ENCODE measurements at regions of chr12 and their contacts with region 1.

Region 1: GRCh38 chr12:104381731-104382480 is 74.8 kb upstream of the CHST11 start:
- DNase-seq: peak; percentile 51
- H3K4me3 ChIP-seq: no peak overlapping the region
- H3K27ac ChIP-seq: no peak overlapping the region
- H3K27me3 ChIP-seq: no peaks in the 10 kb centered on the region
- CTCF ChIP-seq: peak; percentile 99

Region 2: GRCh38 chr12:104201238-104202001 is 180.5 kb before region 1 on chr12:
- CTCF ChIA-PET with region 1: interaction called, 10 read pairs
- POLR2A ChIA-PET with region 1: no interaction called
- DNase-seq: no peak
- H3K4me3 ChIP-seq: no peak overlapping the region
- H3K27ac ChIP-seq: no peak overlapping the region
- H3K27me3 ChIP-seq: no peaks in the 10 kb centered on the region
- CTCF ChIP-seq: peak; percentile 94

Region 3: DNA sequence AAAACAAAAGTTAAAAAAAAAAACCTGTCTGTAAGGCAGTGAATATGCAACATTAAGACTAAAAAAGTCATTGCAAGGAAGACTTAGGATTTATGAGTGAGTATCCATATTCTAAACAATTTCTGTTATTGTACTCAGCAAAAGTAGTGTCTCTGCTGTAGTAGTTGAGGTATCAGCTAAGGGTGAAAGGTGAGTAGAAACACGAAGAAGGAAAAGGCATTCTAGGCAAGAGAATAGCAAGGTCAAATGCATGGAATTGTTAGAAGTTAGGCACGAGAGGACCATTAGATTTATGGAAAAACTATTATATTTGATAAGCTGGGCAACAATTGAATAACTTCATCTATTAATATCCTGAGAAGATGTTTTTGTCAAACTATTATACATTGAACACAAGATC is 76.6 kb before region 1 on chr12:
- CTCF ChIA-PET with region 1: no interaction called
- POLR2A ChIA-PET with region 1: no interaction called
- DNase-seq: no peak
- H3K4me3 ChIP-seq: no peak overlapping the region
- H3K27ac ChIP-seq: no peak overlapping the region
- H3K27me3 ChIP-seq: no peaks in the 10 kb centered on the region
- CTCF ChIP-seq: no peak

Region 4: DNA sequence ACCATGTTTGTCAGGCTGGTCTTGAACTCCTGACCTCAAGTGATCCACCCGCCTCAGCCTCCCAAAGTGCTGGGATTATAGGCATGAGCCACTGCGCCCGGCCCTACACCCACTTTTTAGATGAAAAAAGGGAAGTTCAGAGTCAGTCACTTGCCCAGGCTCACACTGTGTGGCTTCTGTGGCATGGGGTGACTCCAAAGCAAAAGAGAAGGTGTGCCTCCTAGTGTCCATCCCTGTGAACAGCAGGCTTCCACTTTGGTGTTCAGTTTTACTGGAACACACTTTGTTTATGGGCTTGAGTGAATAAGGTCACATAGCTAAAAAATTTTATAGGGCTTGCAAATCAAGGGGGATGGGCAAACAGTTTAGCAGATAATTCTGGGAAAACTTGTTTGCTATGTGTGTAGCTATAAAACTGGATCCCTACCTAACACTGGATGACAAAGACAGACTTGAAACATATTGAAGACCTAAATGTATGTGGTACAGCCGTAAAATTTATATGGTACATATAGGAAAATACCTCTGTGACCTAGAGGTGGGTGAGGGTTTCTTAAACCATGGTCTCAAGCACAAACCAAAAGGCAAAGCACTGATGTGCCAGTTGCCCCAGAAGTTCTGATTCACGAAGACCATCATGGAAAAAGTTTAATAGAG is 23.4 kb before region 1 on chr12:
- CTCF ChIA-PET with region 1: no interaction called
- POLR2A ChIA-PET with region 1: no interaction called
- DNase-seq: no peak
- H3K4me3 ChIP-seq: no peak overlapping the region
- H3K27ac ChIP-seq: no peak overlapping the region
- H3K27me3 ChIP-seq: no peaks in the 10 kb centered on the region
- CTCF ChIP-seq: peak; percentile 74

Region 5: GRCh38 chr12:104588068-104588920 is 206.4 kb after region 1 on chr12:
- CTCF ChIA-PET with region 1: interaction called, 13 read pairs
- POLR2A ChIA-PET with region 1: no interaction called
- DNase-seq: no peak
- H3K4me3 ChIP-seq: no peak overlapping the region
- H3K27ac ChIP-seq: no peak overlapping the region
- H3K27me3 ChIP-seq: no peaks in the 10 kb centered on the region
- CTCF ChIP-seq: no peak

Region 6: DNA sequence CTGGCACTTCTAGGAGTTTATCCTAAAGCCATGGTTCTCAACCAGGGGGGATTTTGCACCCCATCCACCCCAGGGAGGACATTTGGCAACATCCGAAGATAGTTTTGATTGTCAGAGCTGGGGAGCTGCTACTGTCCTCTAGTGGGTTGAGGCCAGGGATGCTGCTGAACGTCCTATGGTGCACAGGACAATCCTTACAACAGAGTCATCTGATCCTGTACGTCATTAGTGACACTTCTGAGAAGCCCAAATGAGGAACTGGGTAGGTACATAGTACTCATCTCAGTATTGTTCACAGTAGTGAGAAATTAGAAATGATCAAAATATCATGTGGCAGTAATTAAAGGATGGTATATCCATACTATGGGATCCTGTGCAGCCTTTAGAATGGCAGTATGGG is 260.0 kb after region 1 on chr12:
- CTCF ChIA-PET with region 1: no interaction called
- POLR2A ChIA-PET with region 1: no interaction called
- DNase-seq: no peak
- H3K4me3 ChIP-seq: no peak overlapping the region
- H3K27ac ChIP-seq: no peak overlapping the region
- H3K27me3 ChIP-seq: peaks cover 2% of the 10 kb centered on the region
- CTCF ChIP-seq: no peak

Region 7: GRCh38 chr12:104855599-104855998 is 473.7 kb after region 1 on chr12:
- CTCF ChIA-PET with region 1: interaction called, 10 read pairs
- POLR2A ChIA-PET with region 1: no interaction called
- DNase-seq: no peak
- H3K4me3 ChIP-seq: no peak overlapping the region
- H3K27ac ChIP-seq: no peak overlapping the region
- H3K27me3 ChIP-seq: no peaks in the 10 kb centered on the region
- CTCF ChIP-seq: no peak

Region 8: DNA sequence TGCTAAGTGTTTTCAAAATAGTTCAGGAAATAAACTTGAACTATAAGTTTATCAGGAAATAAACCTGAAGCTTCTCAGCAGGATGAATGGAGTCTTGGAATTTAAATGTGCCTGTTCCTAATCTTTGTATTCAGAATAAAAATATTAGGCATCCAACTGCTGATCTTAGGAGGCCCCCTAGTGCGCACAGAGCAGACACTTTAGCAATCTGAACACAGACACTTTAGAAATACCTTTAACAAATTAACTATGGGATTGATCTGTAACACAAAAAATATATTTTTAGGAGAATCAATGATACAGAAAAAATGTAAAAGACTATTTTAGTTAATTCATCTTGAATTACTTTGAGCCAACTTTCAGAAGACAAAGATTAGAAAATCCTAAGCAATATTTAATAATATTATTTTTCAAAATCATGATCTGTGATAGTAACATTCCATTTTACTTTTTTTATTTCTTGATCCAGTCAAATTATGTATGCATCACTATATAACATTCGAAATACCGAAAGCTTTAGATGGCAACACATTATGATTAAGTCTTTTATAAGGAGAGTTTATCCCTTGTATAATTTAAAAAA is 495.3 kb after region 1 on chr12:
- CTCF ChIA-PET with region 1: interaction called, 177 read pairs
- POLR2A ChIA-PET with region 1: no interaction called
- DNase-seq: no peak
- H3K4me3 ChIP-seq: no peak overlapping the region
- H3K27ac ChIP-seq: no peak overlapping the region
- H3K27me3 ChIP-seq: no peaks in the 10 kb centered on the region
- CTCF ChIP-seq: peak; percentile 91

Region 9: DNA sequence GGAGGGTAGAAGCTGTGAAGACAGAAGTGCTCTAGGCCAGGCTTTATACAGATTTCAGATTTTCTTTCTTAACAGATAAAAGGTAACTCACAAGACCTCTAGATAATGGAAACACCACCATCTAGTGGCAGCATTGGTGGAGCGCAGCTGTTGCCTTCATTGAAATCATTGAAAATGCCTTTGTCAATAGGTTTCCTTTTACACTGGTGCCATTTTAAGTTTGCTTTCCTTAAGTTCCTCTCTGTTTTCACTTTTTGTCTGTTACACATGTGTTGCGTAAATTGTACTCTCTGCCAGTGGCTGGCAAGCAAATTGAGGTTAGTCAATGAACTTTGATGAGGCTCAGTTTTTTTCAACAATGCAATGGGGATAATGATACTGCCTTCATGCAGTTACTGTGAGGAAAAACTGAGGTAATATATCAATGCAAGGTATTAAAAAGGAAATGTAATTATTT is 671.2 kb after region 1 on chr12:
- CTCF ChIA-PET with region 1: interaction called, 27 read pairs
- POLR2A ChIA-PET with region 1: no interaction called
- DNase-seq: peak; percentile 46
- H3K4me3 ChIP-seq: no peak overlapping the region
- H3K27ac ChIP-seq: no peak overlapping the region
- H3K27me3 ChIP-seq: no peaks in the 10 kb centered on the region
- CTCF ChIP-seq: peak; percentile 88